ENCODE measurements at regions of chr2 and their contacts with region 1.

Region 1: GRCh38 chr2:229861431-229861830 is 60.4 kb downstream of the TRIP12 start:
- DNase-seq: no peak
- H3K4me3 Mint-ChIP-seq: no peak overlapping the region
- H3K27ac Mint-ChIP-seq: no peak overlapping the region
- H3K4me1 Mint-ChIP-seq: peaks cover 23% of the 10 kb centered on the region
- H3K27me3 Mint-ChIP-seq: no peaks in the 10 kb centered on the region

Region 2: DNA sequence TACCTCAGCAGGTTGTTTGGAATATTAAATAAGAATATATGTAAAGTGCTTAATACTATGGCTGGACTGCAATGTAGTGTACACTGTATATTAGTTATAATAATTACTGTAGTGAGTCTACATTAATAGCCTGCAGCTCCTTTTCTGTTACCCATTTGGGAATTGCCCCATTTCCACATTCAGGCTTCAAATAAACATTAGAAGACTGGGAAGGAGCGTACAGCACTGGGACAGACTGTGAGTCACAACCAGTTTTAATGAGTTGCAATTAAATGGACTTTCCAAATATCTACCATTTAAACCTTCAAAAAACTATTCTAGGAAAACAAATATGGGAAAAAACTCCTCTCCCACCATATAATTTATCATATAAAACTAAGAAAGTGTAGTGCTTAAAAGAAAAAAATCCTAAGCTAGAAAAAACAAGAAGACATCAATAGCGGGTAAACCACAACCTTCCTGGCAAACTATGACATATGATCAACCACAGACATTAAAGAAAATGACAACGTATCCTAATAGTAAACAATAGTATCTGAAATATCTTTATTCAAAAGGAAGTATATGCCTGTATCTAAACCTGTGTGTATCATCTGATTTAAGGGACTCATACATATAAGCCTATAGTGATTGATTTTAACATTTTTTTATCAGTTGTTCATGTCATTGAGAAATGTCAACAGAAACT is 25.7 kb before region 1 on chr2:
- intact Hi-C with region 1: no loop called
- DNase-seq: no peak
- H3K4me3 Mint-ChIP-seq: peak overlapping the region; percentile 37
- H3K27ac Mint-ChIP-seq: peak overlapping the region; percentile 55
- H3K4me1 Mint-ChIP-seq: peaks cover 65% of the 10 kb centered on the region
- H3K27me3 Mint-ChIP-seq: no peaks in the 10 kb centered on the region

Region 3: GRCh38 chr2:229900012-229900411 is 38.6 kb after region 1 on chr2:
- intact Hi-C with region 1: loop called (anchors 5 kb)
- DNase-seq: no peak
- H3K4me3 Mint-ChIP-seq: no peak overlapping the region
- H3K27ac Mint-ChIP-seq: no peak overlapping the region
- H3K4me1 Mint-ChIP-seq: peaks cover 43% of the 10 kb centered on the region
- H3K27me3 Mint-ChIP-seq: no peaks in the 10 kb centered on the region

Measured in activated T-helper 1 cell treated with anti-CD3 and anti-CD28 coated beads, Interleukin-12 subunit alpha, Interleukin-12 subunit beta, Interleukin-2, Interleukin-4 antibody, amounts not matched to agents 30 ng/mL and 10 ng/mL and 1 ng/mL, durations not matched to agents 14 hours and 24 hours and 36 hours (primary cell).